Activated T-helper 1 cell treated with anti-CD3 and anti-CD28 coated beads, Interleukin-12 subunit alpha, Interleukin-12 subunit beta, Interleukin-2, Interleukin-4 antibody, amounts not matched to agents 30 ng/mL and 10 ng/mL and 1 ng/mL, durations not matched to agents 14 hours and 24 hours and 36 hours (primary cell): ENCODE measurements at regions of chr14 and their contacts with region 1.

Region 1: DNA sequence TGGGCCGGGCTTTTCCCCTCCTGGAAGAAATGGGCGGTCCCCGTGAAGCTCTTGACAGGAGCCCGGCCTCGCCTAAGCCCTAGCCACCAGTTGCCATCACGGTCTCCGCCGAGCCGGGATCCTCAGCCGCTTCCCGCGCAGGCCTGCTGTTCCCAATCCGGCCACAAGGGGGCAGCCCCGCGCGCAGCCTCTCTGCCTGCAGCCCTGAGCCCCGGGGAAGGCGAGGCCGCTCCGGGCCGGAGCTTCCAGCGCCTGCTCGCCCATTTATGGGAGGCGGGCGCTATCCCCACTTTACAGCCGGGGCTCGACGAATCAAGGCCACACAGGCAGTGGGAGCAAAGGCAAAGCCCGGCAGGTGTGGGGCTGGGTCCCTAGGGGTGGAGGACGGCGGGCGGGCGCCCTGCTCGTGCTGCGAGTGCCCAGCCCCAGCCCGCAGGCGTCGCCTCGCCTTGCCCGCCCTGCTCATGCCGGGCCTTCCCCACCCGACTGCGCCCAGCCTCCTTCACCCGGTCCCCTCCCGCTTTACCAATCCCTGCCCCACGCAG is 61.5 kb downstream of the LGMN start:
- DNase-seq: peak; percentile 55
- H3K4me3 Mint-ChIP-seq: no peak overlapping the region
- H3K27ac Mint-ChIP-seq: no peak overlapping the region
- H3K4me1 Mint-ChIP-seq: no peaks in the 10 kb centered on the region
- H3K27me3 Mint-ChIP-seq: no peaks in the 10 kb centered on the region

Region 2: DNA sequence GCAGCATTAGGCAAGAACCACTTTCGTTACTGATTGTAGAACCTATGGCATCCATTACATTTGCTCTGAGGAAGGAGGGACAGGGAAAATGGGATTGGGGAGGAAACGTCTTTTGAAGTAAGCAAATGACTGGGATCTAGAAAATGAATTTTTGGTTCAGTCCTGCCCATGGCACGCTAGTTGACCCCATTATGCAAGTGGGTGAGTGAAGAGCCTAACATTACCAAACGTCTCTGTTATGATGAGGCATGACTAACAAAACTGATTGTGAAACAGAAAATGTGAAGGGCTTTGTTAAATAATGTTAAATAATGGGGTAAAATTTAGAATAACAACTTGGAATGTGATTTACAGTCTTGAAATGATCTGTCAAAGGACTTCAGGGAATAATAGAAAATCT is 526.4 kb before region 1 on chr14:
- intact Hi-C with region 1: loop called (anchors 10 kb)
- DNase-seq: no peak
- H3K4me3 Mint-ChIP-seq: no peak overlapping the region
- H3K27ac Mint-ChIP-seq: no peak overlapping the region
- H3K4me1 Mint-ChIP-seq: peaks cover 8% of the 10 kb centered on the region
- H3K27me3 Mint-ChIP-seq: no peaks in the 10 kb centered on the region

Region 3: DNA sequence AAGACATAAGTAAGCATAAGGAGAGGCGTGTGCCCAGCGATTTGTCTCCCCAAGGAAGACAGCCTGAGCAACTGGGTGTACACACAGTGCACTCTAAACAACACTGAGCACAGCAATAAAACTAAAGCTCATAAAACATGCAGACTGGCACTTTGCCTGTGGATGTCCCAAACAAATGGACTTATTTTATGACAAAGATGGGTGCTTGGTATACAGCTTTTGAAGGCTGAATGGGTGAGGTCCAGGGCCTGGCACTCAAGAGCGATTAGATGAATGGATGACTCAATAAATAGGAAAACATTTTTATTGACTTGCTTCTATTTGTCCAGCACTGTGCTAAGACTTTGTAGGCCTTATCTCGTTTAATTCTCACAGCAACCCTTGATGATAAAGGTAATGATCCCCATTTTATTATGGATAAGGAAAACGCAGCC is 32.9 kb after region 1 on chr14:
- intact Hi-C with region 1: loop called (anchors 2 kb)
- DNase-seq: no peak
- H3K4me3 Mint-ChIP-seq: no peak overlapping the region
- H3K27ac Mint-ChIP-seq: no peak overlapping the region
- H3K4me1 Mint-ChIP-seq: peaks cover 4% of the 10 kb centered on the region
- H3K27me3 Mint-ChIP-seq: peaks cover 26% of the 10 kb centered on the region

Region 4: DNA sequence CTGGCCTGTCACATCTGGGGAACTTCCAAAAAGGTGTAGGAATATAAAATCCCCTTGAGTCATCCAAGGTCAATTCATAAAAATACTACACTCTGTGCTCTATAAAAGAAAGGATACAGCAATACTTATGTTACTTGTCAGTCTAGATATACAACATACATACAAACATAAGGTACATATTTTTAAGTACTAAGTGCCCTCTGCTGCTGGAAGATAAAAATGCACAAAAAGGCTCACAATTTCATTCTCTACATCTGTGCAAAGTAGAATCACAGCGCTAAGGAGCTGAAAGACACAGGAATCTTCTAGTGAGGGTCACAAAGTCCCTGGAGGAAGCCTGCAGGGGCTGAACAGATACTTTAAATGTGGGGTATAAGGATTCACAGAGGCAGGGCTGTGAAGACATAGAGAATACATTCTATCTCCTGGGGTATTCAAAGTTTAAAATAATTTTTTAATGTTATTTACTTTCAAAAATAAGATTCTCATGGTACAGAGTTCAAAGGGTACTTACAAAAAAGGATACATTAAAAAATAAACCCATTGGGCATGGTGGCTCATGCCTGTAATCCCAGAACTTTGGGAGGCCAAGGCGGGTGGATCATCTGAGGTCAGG is 97.0 kb after region 1 on chr14:
- intact Hi-C with region 1: loop called (anchors 1 kb)
- DNase-seq: peak; percentile 20
- H3K4me3 Mint-ChIP-seq: no peak overlapping the region
- H3K27ac Mint-ChIP-seq: no peak overlapping the region
- H3K4me1 Mint-ChIP-seq: peaks cover 26% of the 10 kb centered on the region
- H3K27me3 Mint-ChIP-seq: peaks cover 8% of the 10 kb centered on the region